Calu3 (cell line): ENCODE measurements at regions of chr2 and their contacts with region 1.

Region 1: GRCh38 chr2:120287183-120288015 is 34.7 kb downstream of the RALB start:
- DNase-seq: peak; percentile 41
- H3K4me3 Mint-ChIP-seq: peak overlapping the region; percentile 44
- H3K27ac Mint-ChIP-seq: peak overlapping the region; percentile 55
- H3K4me1 Mint-ChIP-seq: peaks cover 48% of the 10 kb centered on the region
- H3K27me3 Mint-ChIP-seq: no peaks in the 10 kb centered on the region
- CTCF ChIP-seq: no peak

Region 2: GRCh38 chr2:120177001-120177621 is 110.3 kb before region 1 on chr2:
- CTCF ChIA-PET with region 1: no interaction called
- intact Hi-C with region 1: no loop called
- DNase-seq: no peak
- H3K4me3 Mint-ChIP-seq: no peak overlapping the region
- H3K27ac Mint-ChIP-seq: no peak overlapping the region
- H3K4me1 Mint-ChIP-seq: no peaks in the 10 kb centered on the region
- H3K27me3 Mint-ChIP-seq: no peaks in the 10 kb centered on the region
- CTCF ChIP-seq: no peak

Region 3: DNA sequence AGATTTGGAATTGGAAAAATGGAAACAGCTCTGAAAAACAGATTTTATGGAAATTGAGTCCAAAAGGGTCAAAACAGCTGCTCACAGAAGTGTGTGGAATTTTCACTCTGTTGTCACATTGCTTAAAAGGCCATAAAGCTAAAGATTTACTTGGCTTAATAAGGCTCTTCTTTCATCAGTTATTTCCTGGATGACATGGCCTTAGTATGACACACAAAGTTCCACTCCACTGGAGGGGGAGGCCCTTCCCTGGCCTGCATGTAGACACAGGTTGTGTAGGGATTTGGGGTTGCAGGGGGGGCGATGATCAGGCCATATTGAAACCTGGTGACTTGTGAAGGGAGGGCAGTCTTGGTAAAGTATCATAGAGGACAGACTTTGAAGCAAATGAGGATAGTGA is 98.2 kb before region 1 on chr2:
- CTCF ChIA-PET with region 1: no interaction called
- intact Hi-C with region 1: no loop called
- DNase-seq: no peak
- H3K4me3 Mint-ChIP-seq: no peak overlapping the region
- H3K27ac Mint-ChIP-seq: no peak overlapping the region
- H3K4me1 Mint-ChIP-seq: no peaks in the 10 kb centered on the region
- H3K27me3 Mint-ChIP-seq: peaks cover 20% of the 10 kb centered on the region
- CTCF ChIP-seq: no peak

Region 4: DNA sequence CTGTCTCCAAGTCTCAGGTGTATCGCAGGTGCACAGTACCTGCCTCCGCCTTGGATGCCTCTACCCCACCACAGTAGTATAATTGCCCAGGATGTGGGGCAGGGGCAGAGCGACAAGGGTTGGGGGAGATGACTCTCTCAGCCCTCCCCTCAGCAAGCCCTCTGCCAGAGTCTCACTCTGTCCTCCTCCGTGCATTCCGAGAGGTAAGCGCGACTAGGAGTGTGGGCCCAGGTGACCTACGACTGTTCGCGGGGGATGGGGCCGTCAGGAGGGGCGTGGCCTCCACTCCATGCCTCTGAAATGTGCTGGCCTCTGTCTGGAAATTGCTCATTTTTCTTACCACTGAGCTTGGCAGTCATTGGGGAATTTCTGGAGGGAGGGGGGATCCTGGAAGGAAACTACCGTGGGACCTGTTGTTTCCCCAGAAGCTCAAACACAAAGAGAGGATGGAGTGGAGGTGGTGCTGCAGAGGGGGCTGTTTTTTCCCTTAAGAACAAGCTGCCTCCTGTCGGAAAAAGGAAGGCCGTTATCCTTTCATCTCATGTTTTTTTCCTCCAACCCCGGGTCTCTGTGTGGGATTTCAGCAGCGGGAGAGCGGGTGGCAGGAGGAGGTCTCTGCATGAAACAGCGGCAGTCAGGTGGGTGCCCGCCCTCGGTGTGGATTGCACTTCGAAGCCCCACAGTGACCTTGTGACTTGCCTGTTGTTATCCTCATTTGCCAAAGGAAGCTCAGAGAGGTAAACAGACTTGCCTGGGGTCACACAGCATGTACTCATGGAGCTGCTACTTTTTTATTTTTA is 47.7 kb before region 1 on chr2:
- CTCF ChIA-PET with region 1: no interaction called
- intact Hi-C with region 1: loop called (anchors 5 kb)
- DNase-seq: peak; percentile 75
- H3K4me3 Mint-ChIP-seq: peak overlapping the region; percentile 1
- H3K27ac Mint-ChIP-seq: peak overlapping the region; percentile 37
- H3K4me1 Mint-ChIP-seq: peaks cover 30% of the 10 kb centered on the region
- H3K27me3 Mint-ChIP-seq: no peaks in the 10 kb centered on the region
- CTCF ChIP-seq: no peak

Region 5: GRCh38 chr2:120252225-120253021 is 35.0 kb before region 1 on chr2 and contains the start of gene RALB:
- CTCF ChIA-PET with region 1: interaction called, 3 read pairs
- intact Hi-C with region 1: loop called (anchors 5 kb)
- DNase-seq: peak; percentile 99
- H3K4me3 Mint-ChIP-seq: peak within 1 kb of the TSS; percentile 96
- H3K27ac Mint-ChIP-seq: peak within 1 kb of the TSS; percentile 60
- H3K4me1 Mint-ChIP-seq: peaks cover 40% of the 10 kb centered on the region
- H3K27me3 Mint-ChIP-seq: peaks cover 13% of the 10 kb centered on the region
- CTCF ChIP-seq: no peak
- total RNA-seq, gene RALB: 40.2 and 41.3 TPM in 2 replicates